Vagina (tissue), 2 donors: ENCODE measurements at regions of chrX and their contacts with region 1.

Region 1: GRCh38 chrX:48021026-48021900 is 14.5 kb downstream of the SPACA5 start:
- DNase-seq: no peak
- H3K4me3 ChIP-seq: peak overlapping the region; percentile 31 to 43
- H3K27ac ChIP-seq: peak overlapping the region; percentile 70
- H3K4me1 ChIP-seq: no peaks in the 10 kb centered on the region
- H3K27me3 ChIP-seq: no peaks in the 10 kb centered on the region
- CTCF ChIP-seq: no peak
- POLR2A ChIP-seq: no peak

Region 2: DNA sequence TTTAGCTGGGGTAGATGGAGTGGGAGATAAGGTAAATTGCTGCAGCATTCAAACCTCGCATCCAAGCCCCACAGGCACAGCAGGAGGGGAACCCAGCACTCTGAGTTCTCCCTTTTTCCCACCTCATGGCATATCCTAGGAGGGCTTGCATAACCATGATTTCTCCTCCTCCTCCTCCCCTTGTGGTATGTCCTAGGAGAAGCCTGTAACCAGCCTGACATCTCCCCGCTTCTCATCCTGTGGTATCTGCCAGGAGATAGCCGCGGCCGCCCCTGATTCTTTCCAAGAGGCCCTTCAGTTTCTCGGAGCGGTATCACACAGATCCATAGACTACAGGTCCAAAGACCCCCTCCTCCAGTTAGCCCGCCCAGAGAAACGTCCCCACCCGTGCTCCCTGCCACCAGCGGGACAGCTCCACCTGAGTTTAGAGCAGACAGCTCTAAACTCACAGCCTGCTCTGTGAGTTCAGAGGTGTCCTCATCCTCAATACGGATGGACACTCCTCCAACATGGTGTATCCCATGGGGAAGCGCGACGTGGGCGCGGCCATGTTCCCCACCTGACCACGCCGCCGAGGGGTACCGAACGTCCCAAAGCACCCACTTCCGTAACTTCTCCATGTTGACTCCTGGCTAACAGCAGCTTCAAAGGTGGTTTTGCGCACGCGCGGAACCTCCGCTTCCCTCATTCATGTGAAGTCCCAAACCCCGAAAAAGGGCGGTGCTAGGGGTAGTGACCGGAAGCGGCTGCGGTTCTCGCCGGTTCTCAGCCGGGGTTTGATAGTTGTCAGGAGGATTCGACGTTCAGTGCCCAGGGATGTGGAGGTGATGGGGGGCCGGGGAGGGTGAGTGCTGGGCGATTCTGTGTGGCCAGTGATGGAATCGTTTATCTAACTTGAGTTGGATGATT is 184.8 kb before region 1 on chrX and contains the start of gene ZNF81:
- intact Hi-C with region 1: loop called (anchors 10 kb)
- DNase-seq: peak in 1 of 2 donors; percentile 93
- H3K4me3 ChIP-seq: peak within 1 kb of the TSS; percentile 46 to 52
- H3K27ac ChIP-seq: peak within 1 kb of the TSS; percentile 63
- H3K4me1 ChIP-seq: no peaks in the 10 kb centered on the region
- H3K27me3 ChIP-seq: no peaks in the 10 kb centered on the region
- CTCF ChIP-seq: no peak
- POLR2A ChIP-seq: no peak
- total RNA-seq, gene ZNF81: 6.9 TPM

Region 3: DNA sequence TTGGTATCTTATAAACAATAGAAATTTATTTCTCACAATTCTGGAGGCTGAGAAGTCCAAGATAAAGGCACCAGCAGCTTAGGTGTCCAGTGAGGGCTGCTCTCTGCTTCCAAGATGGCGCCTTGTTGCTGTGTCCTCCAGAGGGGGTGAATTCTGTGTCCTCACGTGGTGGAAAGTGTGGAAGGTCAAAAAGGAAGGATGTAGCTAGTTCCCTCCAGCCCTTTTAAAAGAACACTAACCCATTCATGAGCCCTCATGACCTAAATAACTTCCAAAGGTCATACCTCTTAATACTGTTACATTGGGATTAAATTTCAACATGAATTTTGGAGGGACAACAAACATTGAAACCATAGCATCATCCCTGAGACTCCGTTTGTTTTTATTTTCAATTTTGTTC is 135.8 kb before region 1 on chrX:
- intact Hi-C with region 1: no loop called
- DNase-seq: no peak
- H3K4me3 ChIP-seq: no peak overlapping the region
- H3K27ac ChIP-seq: no peak overlapping the region
- H3K4me1 ChIP-seq: no peaks in the 10 kb centered on the region
- H3K27me3 ChIP-seq: no peaks in the 10 kb centered on the region
- CTCF ChIP-seq: no peak
- POLR2A ChIP-seq: no peak

Region 4: GRCh38 chrX:48035891-48036290 is 14.6 kb after region 1 on chrX:
- intact Hi-C with region 1: no loop called
- DNase-seq: no peak
- H3K4me3 ChIP-seq: no peak overlapping the region
- H3K27ac ChIP-seq: no peak overlapping the region
- H3K4me1 ChIP-seq: no peaks in the 10 kb centered on the region
- H3K27me3 ChIP-seq: no peaks in the 10 kb centered on the region
- CTCF ChIP-seq: no peak
- POLR2A ChIP-seq: no peak

Region 5: DNA sequence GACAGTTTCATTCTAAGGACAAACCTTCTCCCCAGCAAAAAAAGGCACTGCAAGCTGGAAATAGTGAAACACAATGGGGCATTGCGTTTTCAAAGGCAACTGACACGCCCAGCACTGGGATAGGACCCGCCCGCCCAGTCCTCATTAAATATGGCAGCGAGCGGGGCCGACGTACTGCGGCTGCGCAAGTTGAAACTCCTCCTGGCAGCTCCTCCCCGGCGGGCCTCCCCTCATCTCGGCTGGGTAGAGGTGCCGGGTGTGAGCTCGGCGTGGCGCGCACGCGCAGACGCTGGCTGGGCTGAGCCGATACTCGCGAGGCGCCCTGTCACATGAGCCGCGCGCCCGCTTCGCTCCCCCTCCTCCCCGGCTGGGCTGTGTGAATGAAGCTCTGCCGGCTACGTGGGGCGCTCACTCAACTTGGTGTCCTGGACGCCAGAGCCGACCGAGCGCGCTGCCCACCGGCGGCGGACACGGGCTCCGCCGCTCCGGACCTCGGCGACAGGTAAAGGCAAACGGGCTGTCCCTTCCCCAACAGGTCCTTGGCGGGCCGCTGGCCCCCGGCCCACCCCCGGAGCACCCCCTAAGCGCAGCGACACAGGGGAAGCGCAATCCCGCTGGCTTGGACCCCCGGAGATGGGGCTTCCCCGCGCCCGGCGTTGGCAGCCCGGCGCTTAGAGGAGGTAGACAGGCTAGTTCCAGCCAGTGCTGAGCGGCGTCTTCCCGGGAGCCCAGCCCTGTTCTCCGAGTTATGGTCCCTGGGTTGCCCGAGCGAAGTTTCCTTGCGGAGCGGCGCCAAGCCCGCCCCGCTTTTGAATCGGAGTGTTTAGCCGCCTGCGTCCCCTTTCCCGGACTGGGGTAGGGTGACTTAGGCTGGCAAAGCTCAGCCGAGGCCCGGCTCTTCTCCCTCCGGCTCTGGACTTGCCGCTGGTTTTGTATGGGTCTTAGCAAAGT is 1901.3 kb after region 1 on chrX and contains the start of gene CLCN5:
- intact Hi-C with region 1: no loop called
- DNase-seq: peak; percentile 95 to 97
- H3K4me3 ChIP-seq: peak within 1 kb of the TSS; percentile 51 to 62
- H3K27ac ChIP-seq: peak within 1 kb of the TSS; percentile 79
- H3K4me1 ChIP-seq: peaks cover 6% of the 10 kb centered on the region
- H3K27me3 ChIP-seq: no peaks in the 10 kb centered on the region
- CTCF ChIP-seq: no peak
- POLR2A ChIP-seq: peak in 1 of 2 donors; percentile 30
- total RNA-seq, gene CLCN5: 4.9 TPM